ENCODE measurements at regions of chr11 and their contacts with region 1.

Region 1: DNA sequence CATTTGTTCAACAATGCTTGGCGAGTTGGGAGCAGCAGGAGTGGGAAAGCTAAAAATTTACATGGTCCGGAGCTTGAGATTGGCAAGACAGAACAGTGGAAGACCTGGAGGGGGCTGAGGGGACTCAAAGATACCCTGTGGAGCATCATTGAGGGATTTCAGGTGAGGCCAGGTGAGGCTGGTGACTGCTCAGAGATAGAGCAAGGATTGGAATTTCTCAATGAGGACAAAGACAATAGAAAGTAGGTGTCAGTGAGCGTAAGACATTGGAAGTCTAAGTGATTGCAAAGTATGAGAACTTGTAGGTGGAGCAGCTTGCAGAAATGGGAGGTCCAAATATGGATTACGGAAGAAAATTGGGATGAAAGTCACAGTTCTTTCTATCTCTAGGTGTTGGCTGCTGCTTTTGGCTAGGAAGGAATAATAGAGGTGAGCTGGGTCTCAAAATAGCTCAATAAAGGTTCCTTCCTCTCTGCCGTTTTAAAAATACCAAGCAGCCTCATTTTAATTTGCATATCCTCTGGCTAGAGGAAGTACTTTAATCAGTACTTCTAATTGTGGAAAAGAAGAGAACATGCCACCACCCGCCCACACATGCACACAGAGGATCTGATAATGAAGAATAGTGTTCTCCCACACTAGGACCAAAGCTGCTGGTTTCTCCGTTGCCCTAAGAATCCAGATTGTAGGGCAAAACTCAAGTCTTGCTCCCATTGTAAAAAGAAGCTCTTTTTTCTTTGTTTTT is 41.8 kb upstream of the SORL1-AS1 start:
- DNase-seq: no peak
- ATAC-seq: peak; percentile 80
- H3K4me3 Mint-ChIP-seq: peak overlapping the region; percentile 69
- H3K27ac Mint-ChIP-seq: peak overlapping the region; percentile 74
- H3K4me1 Mint-ChIP-seq: peaks cover 71% of the 10 kb centered on the region
- H3K27me3 Mint-ChIP-seq: no peaks in the 10 kb centered on the region
- CTCF ChIP-seq: no peak

Region 2: GRCh38 chr11:120168960-120169681 is 1325.4 kb before region 1 on chr11:
- CTCF ChIA-PET with region 1: no interaction called
- POLR2A ChIA-PET with region 1: no interaction called
- intact Hi-C with region 1: no loop called
- DNase-seq: peak; percentile 42
- ATAC-seq: peak; percentile 65
- H3K4me3 Mint-ChIP-seq: peak overlapping the region; percentile 53
- H3K27ac Mint-ChIP-seq: no peak overlapping the region
- H3K4me1 Mint-ChIP-seq: peaks cover 12% of the 10 kb centered on the region
- H3K27me3 Mint-ChIP-seq: peaks cover 81% of the 10 kb centered on the region
- CTCF ChIP-seq: no peak

Region 3: DNA sequence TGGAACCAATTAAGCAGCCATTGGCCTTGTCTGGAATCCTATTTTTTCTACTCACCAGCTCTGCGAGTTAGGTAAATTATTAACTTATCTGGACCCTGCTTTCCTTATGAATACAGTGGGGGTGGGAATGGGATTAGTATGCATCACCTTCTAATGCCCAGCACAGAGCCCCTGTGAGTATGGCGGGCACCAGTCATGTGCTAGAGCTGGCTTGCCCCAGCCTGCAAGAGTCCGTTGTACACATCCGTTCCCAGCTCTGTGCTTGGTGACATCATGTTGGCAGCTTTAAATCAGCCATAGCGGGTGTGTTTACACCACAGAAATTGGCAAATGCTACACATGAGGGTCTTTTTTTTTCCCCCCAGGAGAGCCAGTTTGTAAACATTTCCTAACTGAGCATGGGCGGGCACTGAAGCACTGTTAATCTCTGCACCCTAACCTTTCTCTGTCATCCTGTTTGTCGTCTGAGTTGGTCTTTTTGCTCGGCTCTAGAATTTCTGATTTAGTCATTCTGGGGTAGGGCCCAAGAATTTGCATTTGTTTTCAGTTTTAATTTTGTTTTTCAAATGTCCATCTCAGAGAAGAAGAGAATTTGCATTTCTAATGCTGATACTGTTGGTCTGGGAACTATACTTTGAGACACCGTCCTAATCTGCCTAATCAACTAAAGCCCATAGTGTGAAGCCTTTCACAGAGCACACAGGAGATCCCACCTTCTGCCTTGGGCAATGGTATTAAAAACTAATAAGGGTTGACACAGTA is 600.9 kb before region 1 on chr11:
- CTCF ChIA-PET with region 1: no interaction called
- POLR2A ChIA-PET with region 1: no interaction called
- intact Hi-C with region 1: no loop called
- DNase-seq: no peak
- ATAC-seq: no peak
- H3K4me3 Mint-ChIP-seq: no peak overlapping the region
- H3K27ac Mint-ChIP-seq: no peak overlapping the region
- H3K4me1 Mint-ChIP-seq: no peaks in the 10 kb centered on the region
- H3K27me3 Mint-ChIP-seq: peaks cover 9% of the 10 kb centered on the region
- CTCF ChIP-seq: no peak

Region 4: GRCh38 chr11:121300313-121300971 is 194.1 kb before region 1 on chr11:
- CTCF ChIA-PET with region 1: no interaction called
- POLR2A ChIA-PET with region 1: no interaction called
- intact Hi-C with region 1: no loop called
- DNase-seq: no peak
- ATAC-seq: no peak
- H3K4me3 Mint-ChIP-seq: no peak overlapping the region
- H3K27ac Mint-ChIP-seq: no peak overlapping the region
- H3K4me1 Mint-ChIP-seq: peaks cover 26% of the 10 kb centered on the region
- H3K27me3 Mint-ChIP-seq: no peaks in the 10 kb centered on the region
- CTCF ChIP-seq: no peak

Region 5: DNA sequence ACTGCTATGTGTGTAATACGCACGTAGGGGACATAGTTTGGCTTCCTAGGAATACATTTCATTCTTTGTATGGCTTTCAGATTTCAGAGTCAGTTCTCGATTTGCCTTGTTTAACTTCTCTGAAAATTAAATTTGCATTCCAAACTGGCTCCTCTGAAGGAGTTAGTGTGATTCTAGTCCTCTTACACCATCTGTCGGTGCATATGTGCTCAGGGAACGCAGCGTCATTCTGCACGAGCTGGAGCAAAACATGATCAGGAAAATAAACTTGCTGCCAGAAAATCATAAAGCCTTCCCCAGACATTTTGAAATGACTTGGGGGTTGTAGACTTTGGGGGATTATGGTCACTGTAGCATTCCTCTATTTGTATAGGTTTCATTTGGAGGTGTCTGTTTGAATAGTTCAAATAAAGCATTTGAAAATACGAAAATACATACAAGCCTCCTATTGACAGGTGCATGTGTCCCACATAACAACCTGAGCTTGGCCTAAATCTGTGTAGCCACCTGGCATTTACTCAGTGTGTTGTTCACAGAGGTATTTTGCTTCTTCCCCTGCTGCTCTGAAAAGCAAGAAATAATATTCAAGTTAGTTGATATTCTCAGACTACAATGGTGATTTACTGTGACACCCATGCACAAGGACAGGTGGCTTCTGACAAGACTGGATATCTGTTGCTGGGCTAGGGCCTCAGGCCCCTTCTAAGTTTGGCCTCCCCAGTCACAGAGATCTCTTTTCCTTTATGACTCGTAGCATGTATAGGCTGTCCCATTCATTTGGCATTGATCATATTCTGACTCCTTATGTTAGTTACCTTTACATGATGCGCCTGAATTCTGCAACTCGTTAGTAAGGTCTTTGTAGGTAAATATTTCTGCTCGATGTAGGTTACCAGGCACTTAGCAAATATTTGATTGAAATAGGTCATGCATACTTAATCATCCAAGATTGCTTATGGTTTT is 39.9 kb after region 1 on chr11:
- CTCF ChIA-PET with region 1: no interaction called
- POLR2A ChIA-PET with region 1: no interaction called
- intact Hi-C with region 1: loop called (anchors 5 kb)
- DNase-seq: no peak
- ATAC-seq: no peak
- H3K4me3 Mint-ChIP-seq: no peak overlapping the region
- H3K27ac Mint-ChIP-seq: no peak overlapping the region
- H3K4me1 Mint-ChIP-seq: peaks cover 36% of the 10 kb centered on the region
- H3K27me3 Mint-ChIP-seq: no peaks in the 10 kb centered on the region
- CTCF ChIP-seq: no peak

Region 6: GRCh38 chr11:121681550-121682268 is 187.2 kb after region 1 on chr11:
- CTCF ChIA-PET with region 1: no interaction called
- POLR2A ChIA-PET with region 1: no interaction called
- intact Hi-C with region 1: no loop called
- DNase-seq: no peak
- ATAC-seq: no peak
- H3K4me3 Mint-ChIP-seq: no peak overlapping the region
- H3K27ac Mint-ChIP-seq: no peak overlapping the region
- H3K4me1 Mint-ChIP-seq: no peaks in the 10 kb centered on the region
- H3K27me3 Mint-ChIP-seq: peaks cover 14% of the 10 kb centered on the region
- CTCF ChIP-seq: no peak

Measured in activated B cell treated with CpG ODN at 0.5 μM for 24 hours (primary cell).